Aorta (tissue), 5 donors: ENCODE measurements at regions of chrX and their contacts with region 1.

Region 1: GRCh38 chrX:153470435-153471363 is at the start of gene HAUS7:
- DNase-seq: peak; percentile 93 to 96
- ATAC-seq: peak; percentile 87
- H3K4me3 ChIP-seq: peak within 1 kb of the TSS in 1 of 2 donors; percentile 60
- H3K27ac ChIP-seq: peak within 1 kb of the TSS in 1 of 2 donors; percentile 55
- H3K4me1 ChIP-seq: no peaks in the 10 kb centered on the region
- H3K27me3 ChIP-seq: no peaks in the 10 kb centered on the region
- total RNA-seq, gene HAUS7: 34.6 to 76.0 TPM

Region 2: GRCh38 chrX:153495903-153496594 is 25.4 kb after region 1 on chrX:
- intact Hi-C with region 1: loop called in 1 of 2 experiments (anchors 1 kb)
- DNase-seq: no peak
- ATAC-seq: no peak
- H3K4me3 ChIP-seq: peak overlapping the region; percentile 48 to 79
- H3K27ac ChIP-seq: peak overlapping the region in 1 of 2 donors; percentile 80
- H3K4me1 ChIP-seq: no peaks in the 10 kb centered on the region
- H3K27me3 ChIP-seq: no peaks in the 10 kb centered on the region

Region 3: DNA sequence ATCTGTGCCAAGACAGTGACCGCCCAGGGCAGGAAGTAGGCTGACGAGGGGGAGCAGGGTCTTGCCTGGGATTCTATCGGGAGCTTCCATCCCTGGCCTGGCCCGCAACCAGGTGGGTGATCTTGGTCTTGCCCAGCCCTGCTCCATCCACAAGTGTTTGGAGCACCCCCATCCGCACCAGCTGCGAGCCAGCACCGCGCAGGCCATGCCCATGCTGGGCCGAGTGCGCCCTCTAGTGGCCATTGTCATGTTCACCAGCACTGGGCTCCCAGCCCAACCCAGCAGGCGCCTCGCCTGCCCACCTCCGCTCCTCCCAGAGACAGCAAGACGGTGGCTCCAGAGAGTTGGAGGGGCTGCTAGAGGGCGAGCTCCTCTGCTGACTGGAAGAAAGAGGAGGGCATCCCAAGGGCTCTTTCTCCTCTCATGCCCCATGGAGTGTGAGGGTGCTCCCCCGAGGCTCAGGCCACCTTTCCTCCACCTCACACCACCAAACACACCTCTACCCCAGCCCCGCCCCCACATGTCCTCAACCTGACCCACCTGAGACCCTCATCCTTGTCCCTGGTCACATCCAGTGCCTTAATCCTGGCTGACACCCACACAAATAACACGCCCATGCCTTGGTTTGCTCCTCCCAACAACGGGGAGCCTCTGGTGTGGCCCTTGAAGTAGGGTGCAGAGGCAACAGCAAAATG is 36.9 kb after region 1 on chrX:
- intact Hi-C with region 1: loop called (anchors 1 to 2 kb)
- DNase-seq: peak; percentile 91 to 94
- ATAC-seq: peak; percentile 84
- H3K4me3 ChIP-seq: no peak overlapping the region
- H3K27ac ChIP-seq: peak overlapping the region in 1 of 2 donors; percentile 31
- H3K4me1 ChIP-seq: no peaks in the 10 kb centered on the region
- H3K27me3 ChIP-seq: no peaks in the 10 kb centered on the region

Region 4: DNA sequence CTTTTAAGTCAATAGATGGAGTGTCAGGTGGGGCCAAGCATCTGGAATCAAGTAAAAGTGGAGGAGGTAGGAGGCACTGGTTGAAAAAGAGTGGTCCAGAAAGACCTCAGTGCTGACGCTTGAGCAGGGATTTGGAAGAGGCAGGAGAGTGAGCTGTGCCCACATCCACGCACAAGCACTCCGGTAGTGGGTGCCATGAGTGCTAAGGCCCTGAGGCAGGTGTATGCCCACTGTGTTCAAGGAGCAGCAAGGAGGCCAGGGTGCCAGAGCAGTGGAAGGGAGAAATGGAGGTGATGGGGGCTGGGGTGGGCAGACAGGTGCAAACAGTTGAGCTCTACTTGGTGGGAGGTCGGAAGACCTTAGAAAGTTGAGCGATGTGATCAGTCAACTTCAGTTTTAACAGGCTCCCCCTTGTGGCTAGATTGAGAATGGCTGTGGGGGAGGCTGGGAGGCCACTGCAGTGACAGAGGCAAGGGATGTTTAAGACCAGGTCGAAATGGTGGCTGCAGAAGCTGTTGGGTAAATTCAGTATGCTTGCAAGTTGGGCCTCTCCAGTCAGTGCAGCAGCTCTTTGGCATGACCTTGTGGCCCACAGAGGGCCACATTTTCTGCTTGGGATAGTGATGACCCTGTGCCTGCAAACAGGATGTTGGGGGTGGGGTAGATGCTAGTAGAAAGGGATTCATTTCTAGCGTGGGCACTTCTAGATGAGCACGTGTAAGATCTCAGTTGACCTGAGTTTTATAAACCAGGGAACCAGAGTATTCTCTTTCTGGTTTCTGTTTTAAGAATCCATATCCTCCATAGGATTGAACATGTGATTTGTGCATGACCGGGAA is 837.6 kb after region 1 on chrX:
- intact Hi-C with region 1: no loop called
- DNase-seq: peak in 1 of 2 donors; percentile 73
- ATAC-seq: peak; percentile 70
- H3K4me3 ChIP-seq: no peak overlapping the region
- H3K27ac ChIP-seq: no peak overlapping the region
- H3K4me1 ChIP-seq: no peaks in the 10 kb centered on the region
- H3K27me3 ChIP-seq: no peaks in the 10 kb centered on the region